ENCODE measurements at regions of chr11 and their contacts with region 1.

Region 1: GRCh38 chr11:75388386-75389275 is 10.7 kb upstream of the RPS3 start:
- DNase-seq: peak; percentile 76 to 90 (median 80)
- ATAC-seq: peak; percentile 86
- H3K4me3 ChIP-seq: no peak overlapping the region
- H3K27ac ChIP-seq: peak overlapping the region; percentile 37; the same call in 1 of the 3 replicates
- H3K4me1 ChIP-seq: peaks cover 15% of the 10 kb centered on the region in 2 experiments
- H3K27me3 ChIP-seq: no peaks in the 10 kb centered on the region
- CTCF ChIP-seq: peak; percentile 81 to 94 (median 89)
- EP300 ChIP-seq: no peak
- POLR2A ChIP-seq: no peak
- RAD21 ChIP-seq: peak; percentile 92 to 94

Region 2: GRCh38 chr11:75328426-75329277 is 60.0 kb before region 1 on chr11:
- CTCF ChIA-PET with region 1: interaction called, 24 read pairs
- POLR2A ChIA-PET with region 1: interaction called, 3 read pairs
- in situ Hi-C with region 1: loop called (anchors 5 kb)
- intact Hi-C with region 1: loop called (anchors 1 kb)
- DNase-seq: peak; percentile 40 to 73 (median 57)
- ATAC-seq: peak; percentile 90
- H3K4me3 ChIP-seq: no peak overlapping the region
- H3K27ac ChIP-seq: peak overlapping the region; percentile 16; the same call in 2 of the 3 replicates
- H3K4me1 ChIP-seq: peaks cover 26 to 33% of the 10 kb centered on the region in 2 experiments; a peak in 4 of 5 replicates
- H3K27me3 ChIP-seq: no peaks in the 10 kb centered on the region
- CTCF ChIP-seq: peak; percentile 72 to 84 (median 80)
- EP300 ChIP-seq: no peak
- POLR2A ChIP-seq: no peak
- RAD21 ChIP-seq: peak; percentile 92 to 94

Region 3: DNA sequence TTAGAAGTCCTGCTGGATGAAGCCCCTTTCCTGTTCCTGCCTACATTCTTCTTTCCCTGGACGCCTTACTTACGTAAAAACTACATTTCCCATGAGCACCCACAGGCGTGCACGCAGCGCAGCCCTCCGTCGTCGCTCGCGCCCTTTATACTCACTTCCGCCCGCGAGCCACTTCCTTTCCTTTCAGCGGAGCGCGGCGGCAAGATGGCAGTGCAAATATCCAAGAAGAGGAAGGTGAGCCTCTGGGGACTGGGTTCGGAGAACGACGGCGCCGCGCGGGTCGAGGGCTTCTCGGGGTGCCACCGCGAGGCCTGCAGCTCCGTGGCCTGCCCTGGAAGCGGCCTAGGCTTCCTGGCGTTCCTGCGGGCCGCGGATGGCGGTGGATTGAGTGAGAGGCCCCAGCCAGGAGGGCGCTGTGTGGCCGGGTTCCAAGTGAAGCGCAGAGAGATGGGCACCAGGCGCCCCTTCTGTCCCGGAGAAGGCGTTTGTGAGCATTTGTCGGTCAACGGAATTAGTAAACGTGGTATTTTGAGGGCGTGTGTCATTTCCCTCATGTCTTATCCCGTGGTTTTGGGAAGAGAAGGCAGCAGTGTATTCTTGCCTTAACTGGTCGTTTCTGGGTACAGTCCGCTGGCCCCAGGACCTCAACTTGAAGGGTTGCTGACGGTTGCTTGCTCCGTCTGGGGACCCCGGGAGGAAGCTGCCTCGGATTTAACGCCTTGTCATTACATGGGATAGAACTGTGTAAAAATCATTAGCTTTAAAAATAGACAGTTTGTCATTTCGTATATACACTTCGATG is 10.9 kb after region 1 on chr11 and contains the start of gene RPS3:
- CTCF ChIA-PET with region 1: no interaction called
- POLR2A ChIA-PET with region 1: interaction called, 29 read pairs
- in situ Hi-C with region 1: no loop called
- intact Hi-C with region 1: no loop called
- DNase-seq: peak; percentile 83 to 95 (median 88)
- ATAC-seq: peak; percentile 91
- H3K4me3 ChIP-seq: peak within 1 kb of the TSS; percentile 91
- H3K27ac ChIP-seq: peak within 1 kb of the TSS; percentile 96
- H3K4me1 ChIP-seq: peaks cover 14 to 31% of the 10 kb centered on the region in 2 experiments; a peak in 3 of 5 replicates
- H3K27me3 ChIP-seq: no peaks in the 10 kb centered on the region
- CTCF ChIP-seq: no peak
- EP300 ChIP-seq: no peak
- POLR2A ChIP-seq: peak; percentile 99
- RAD21 ChIP-seq: no peak
- polyA plus RNA-seq, gene RPS3: 5,693 to 5,771 TPM

Region 4: GRCh38 chr11:75499449-75500190 is 111.0 kb after region 1 on chr11:
- CTCF ChIA-PET with region 1: no interaction called
- POLR2A ChIA-PET with region 1: no interaction called
- in situ Hi-C with region 1: no loop called
- intact Hi-C with region 1: no loop called
- DNase-seq: peak in 1 of 4 experiments; percentile 26
- ATAC-seq: peak; percentile 46
- H3K4me3 ChIP-seq: no peak overlapping the region
- H3K27ac ChIP-seq: no peak overlapping the region
- H3K4me1 ChIP-seq: peaks cover 4 to 16% of the 10 kb centered on the region in 2 experiments; a peak in 4 of 5 replicates
- H3K27me3 ChIP-seq: no peaks in the 10 kb centered on the region
- CTCF ChIP-seq: no peak
- EP300 ChIP-seq: no peak
- POLR2A ChIP-seq: no peak
- RAD21 ChIP-seq: no peak

Region 5: GRCh38 chr11:75532200-75533048 is 143.8 kb after region 1 on chr11:
- CTCF ChIA-PET with region 1: interaction called, 38 read pairs
- POLR2A ChIA-PET with region 1: interaction called, 3 read pairs
- in situ Hi-C with region 1: no loop called
- intact Hi-C with region 1: loop called (anchors 1 kb)
- DNase-seq: peak; percentile 69 to 91 (median 76)
- ATAC-seq: peak; percentile 42
- H3K4me3 ChIP-seq: no peak overlapping the region
- H3K27ac ChIP-seq: peak overlapping the region; percentile 96; the same call in 2 of the 3 replicates
- H3K4me1 ChIP-seq: peaks cover 41 to 49% of the 10 kb centered on the region in 2 experiments
- H3K27me3 ChIP-seq: no peaks in the 10 kb centered on the region
- CTCF ChIP-seq: peak; percentile 88 to 94 (median 89)
- EP300 ChIP-seq: no peak; the same call in 1 of the 2 replicates
- POLR2A ChIP-seq: no peak
- RAD21 ChIP-seq: peak; percentile 98